Activated CD4-positive, alpha-beta T cell treated with anti-CD3 and anti-CD28 coated beads, Interleukin-2, amount 10 ng/mL, durations not matched to agents 7 days and 5 days (primary cell): ENCODE measurements at regions of chr17 and their contacts with region 1.

Region 1: GRCh38 chr17:42514867-42515266 is 21.2 kb upstream of the NAGLU start:
- DNase-seq: no peak
- H3K4me3 Mint-ChIP-seq: no peak overlapping the region
- H3K27ac Mint-ChIP-seq: no peak overlapping the region
- H3K4me1 Mint-ChIP-seq: peaks cover 6% of the 10 kb centered on the region
- H3K27me3 Mint-ChIP-seq: no peaks in the 10 kb centered on the region

Region 2: GRCh38 chr17:42878123-42878880 is 363.4 kb after region 1 on chr17:
- CTCF ChIA-PET with region 1: no interaction called
- POLR2A ChIA-PET with region 1: interaction called, 10 read pairs
- DNase-seq: no peak
- H3K4me3 Mint-ChIP-seq: no peak overlapping the region
- H3K27ac Mint-ChIP-seq: no peak overlapping the region
- H3K4me1 Mint-ChIP-seq: no peaks in the 10 kb centered on the region
- H3K27me3 Mint-ChIP-seq: peaks cover 24% of the 10 kb centered on the region